ENCODE measurements at regions of chr6 and their contacts with region 1.

Region 1: DNA sequence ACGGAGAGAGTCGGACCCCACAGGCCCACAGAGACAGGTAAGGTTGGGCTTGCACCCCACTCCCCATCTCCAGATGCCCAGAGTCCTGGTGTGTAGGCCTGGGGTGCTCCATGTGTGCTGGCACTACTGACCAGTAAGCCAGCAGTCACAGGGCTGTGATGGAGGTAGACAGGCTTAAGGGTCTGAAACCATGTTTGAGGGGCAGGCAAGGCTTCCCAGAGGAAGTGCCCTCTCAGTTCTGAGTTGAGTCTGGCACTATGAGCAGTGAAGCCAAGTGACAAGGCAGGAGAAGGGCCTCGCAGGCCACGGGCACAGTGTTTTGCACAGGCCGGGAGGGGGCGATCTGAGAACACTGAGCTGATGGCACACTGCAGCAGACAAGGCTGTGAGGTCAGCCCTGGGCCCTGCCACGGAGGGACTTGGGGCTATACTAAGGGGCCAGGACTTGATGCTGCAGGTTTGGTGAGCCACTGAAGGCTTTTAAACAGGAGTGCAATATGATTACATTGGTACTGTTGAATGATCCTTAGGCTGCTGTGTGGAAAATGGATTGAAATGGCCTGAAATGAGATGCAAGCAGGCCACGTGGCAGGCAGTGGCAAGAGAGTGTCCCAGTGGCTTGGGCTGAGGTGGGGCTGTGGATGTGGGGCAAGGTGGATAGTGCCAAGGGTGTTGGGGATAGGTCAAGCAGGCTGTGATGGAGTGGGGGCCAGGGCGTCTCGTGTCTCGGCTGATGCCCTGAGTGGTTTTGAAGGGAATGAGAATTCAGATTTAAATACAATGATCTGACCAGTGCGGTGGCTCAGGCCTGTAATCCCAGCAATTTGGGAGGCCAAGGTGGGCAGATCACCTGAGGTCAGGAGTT is 20.3 kb downstream of the TTBK1 start:
- DNase-seq: peak; percentile 75 to 81
- H3K4me3 ChIP-seq: no peak overlapping the region
- H3K27ac ChIP-seq: no peak overlapping the region
- H3K4me1 ChIP-seq: peaks cover 0 to 8% of the 10 kb centered on the region in 2 donors
- H3K27me3 ChIP-seq: no peaks in the 10 kb centered on the region
- CTCF ChIP-seq: peak; percentile 20 to 77 (median 64)
- POLR2A ChIP-seq: no peak

Region 2: GRCh38 chr6:43334466-43335095 is 71.0 kb after region 1 on chr6:
- intact Hi-C with region 1: loop called (anchors 5 kb)
- DNase-seq: no peak
- H3K4me3 ChIP-seq: no peak overlapping the region
- H3K27ac ChIP-seq: no peak overlapping the region
- H3K4me1 ChIP-seq: no peaks in the 10 kb centered on the region
- H3K27me3 ChIP-seq: no peaks in the 10 kb centered on the region
- CTCF ChIP-seq: peak; percentile 29 to 66 (median 45)
- POLR2A ChIP-seq: no peak